AG04450 (cell line): ENCODE measurements at regions of chr15 and their contacts with region 1.

Region 1: DNA sequence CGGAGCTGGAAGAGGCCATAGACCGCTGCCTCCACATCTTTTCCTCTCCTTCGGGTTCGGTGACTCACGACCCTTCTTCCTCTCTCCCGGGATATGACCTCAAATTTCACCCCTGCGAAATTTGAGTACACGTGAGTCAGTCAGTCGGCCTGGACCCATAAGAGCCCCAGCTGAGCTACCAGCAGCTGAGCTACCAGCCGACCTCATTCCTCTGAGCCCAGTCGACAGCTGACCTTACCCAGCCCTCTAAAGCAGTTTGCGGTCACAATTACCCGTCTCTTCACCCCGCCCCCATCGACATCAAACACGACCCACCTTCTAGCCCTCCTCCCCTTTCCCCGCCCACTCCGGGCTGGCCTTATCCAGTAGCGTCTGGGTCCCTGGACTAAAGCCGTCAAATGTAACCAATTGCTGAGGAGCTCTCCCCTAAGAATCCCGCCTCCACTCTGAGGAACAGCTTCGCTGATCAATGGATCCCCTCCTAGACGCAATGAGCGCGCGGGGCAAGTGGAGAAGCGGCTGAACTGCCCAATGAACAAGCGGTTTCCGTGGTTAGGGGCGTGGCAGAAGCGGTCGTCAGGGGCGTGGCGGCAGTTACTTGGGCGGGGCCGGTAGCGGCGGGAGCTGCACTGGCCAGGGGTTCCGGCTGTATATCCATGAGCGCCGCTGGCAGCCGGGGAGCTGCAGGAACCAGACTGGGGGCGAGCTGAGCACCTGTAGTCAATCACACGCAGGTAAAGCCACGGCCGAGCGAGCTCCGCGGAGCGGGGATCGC is at the start of gene ABHD2:
- DNase-seq: peak; percentile 100
- H3K4me3 ChIP-seq: peak within 1 kb of the TSS; percentile 87
- H3K27ac ChIP-seq: peak within 1 kb of the TSS; percentile 98
- H3K27me3 ChIP-seq: no peaks in the 10 kb centered on the region
- CTCF ChIP-seq: no peak
- polyA plus RNA-seq, gene ABHD2: 51.5 and 60.1 TPM in 2 replicates

Region 2: DNA sequence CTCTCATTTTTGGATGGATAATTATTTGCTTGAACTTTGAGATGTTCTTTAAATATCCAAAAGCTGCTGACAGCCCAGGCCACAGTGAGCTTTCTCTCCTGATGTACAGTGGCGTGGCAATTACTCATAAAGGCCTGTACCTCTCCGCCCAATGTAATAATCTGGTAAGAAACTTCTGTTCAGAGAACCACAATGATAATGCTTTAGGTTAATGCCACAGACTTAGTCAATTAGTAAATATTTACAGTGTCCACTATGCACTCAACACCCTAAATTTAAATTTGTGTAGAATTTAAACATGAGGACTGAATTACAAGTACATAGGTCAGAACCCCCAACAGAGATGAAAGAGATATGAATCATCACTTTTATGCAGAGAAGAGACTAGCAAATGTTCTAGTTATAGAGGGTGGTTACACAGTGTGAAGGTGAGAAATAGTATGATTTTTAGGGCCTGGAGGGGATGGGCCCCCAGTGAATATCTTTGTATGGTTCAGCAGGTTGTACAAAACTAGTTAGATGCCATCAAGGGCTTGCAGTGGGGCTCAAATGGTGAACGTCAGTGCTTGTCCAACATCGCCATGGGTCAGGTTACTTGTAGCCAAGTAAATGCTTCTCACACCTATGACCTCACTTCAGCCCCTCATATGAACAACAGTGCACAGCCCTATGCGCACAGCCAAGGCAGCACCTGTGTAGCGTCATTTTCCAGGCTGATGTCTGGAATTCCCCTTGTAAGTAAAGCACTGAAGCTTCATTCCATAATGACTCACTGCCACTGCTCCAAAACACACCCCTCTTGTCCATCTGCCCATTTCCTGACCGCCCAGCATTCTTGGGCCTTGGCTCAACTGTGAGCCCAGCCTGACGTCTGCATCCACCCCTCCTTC is 13.5 kb after region 1 on chr15:
- CTCF ChIA-PET with region 1: interaction called, 9 read pairs
- POLR2A ChIA-PET with region 1: interaction called, 21 read pairs
- DNase-seq: peak; percentile 97
- H3K4me3 ChIP-seq: no peak overlapping the region
- H3K27ac ChIP-seq: peak overlapping the region; percentile 97
- H3K27me3 ChIP-seq: no peaks in the 10 kb centered on the region
- CTCF ChIP-seq: no peak

Region 3: GRCh38 chr15:89143503-89144162 is 55.6 kb after region 1 on chr15:
- CTCF ChIA-PET with region 1: interaction called, 3 read pairs
- POLR2A ChIA-PET with region 1: interaction called, 10 read pairs
- DNase-seq: peak; percentile 75
- H3K4me3 ChIP-seq: no peak overlapping the region
- H3K27ac ChIP-seq: peak overlapping the region; percentile 11
- H3K27me3 ChIP-seq: no peaks in the 10 kb centered on the region
- CTCF ChIP-seq: no peak

Region 4: DNA sequence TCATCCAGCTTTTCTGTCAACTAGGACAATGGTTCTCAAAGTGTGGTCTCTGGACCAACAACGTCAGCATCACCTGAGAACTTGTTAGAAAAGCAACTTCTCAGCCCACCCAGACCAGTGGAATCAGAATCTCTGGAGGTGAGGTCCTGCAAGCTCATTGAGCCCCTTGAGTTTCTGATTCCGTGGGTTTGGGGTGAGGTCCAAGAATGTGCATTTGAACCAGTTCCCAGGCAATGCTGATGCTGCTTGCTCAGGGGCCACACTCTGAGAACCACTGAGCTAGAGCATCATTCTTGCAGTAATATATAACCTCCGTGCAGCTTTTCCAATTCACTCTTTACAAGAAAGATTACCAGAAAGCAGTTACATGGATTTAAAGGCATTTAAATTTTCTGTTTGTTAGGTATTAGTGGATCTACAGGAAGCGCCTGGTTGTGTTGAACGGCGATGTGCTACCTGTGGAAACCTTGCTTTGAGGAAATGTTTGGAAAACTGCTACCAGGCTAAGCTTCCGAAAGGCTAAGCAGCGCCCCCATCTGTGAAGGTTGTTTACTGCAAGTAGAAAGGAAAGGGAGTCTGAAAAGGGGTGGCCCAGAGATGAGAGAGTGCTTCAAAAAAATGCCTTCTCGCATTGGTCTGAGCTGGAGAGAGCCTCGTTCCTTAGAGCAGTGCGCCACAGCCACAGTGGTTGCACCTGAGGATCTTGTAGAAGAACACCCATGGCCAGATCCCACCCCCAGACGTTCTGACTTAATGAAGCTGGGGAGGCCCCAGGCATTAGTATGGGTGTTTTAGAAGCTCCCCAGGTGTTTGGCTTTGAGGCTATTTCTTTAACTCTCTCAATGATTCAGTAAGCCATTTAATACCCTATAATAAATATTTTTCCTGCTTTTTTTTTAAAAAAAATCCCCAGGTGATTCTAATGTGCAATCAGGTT is 83.4 kb after region 1 on chr15:
- CTCF ChIA-PET with region 1: interaction called, 12 read pairs
- POLR2A ChIA-PET with region 1: interaction called, 3 read pairs
- DNase-seq: no peak
- H3K4me3 ChIP-seq: no peak overlapping the region
- H3K27ac ChIP-seq: no peak overlapping the region
- H3K27me3 ChIP-seq: no peaks in the 10 kb centered on the region
- CTCF ChIP-seq: peak; percentile 72

Region 5: DNA sequence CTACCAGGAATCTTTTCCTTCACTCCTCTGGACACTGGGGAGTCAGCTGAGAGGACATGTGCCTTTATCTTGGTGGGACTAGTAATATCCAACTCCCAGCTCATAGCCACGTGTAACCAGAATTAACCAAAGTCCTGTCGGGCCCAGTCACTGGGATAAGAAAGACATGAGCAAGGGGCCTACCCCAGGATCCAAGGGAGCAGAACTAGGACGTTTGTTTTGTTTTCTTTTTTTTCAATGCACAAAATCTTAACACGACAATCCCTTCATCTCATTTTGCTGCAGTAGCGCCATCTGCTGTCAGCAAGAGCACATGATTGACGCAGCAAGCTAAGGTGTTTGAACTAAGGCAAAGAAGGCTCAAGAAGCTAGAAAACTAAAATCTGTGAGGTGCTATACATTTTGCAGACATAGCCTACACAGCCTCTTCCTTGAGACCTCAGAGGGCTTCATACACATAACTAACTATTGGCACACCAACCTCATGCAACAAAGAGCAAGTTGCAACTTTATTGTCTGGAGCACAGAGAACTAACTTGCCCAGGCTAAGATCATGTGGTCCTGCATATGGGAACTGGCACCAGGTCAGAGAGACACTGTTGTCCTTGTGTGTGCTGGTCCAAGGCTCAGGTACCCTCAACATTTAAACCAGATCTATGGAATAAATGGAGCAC is 89.8 kb after region 1 on chr15:
- CTCF ChIA-PET with region 1: interaction called, 20 read pairs
- POLR2A ChIA-PET with region 1: interaction called, 3 read pairs
- DNase-seq: peak; percentile 57
- H3K4me3 ChIP-seq: no peak overlapping the region
- H3K27ac ChIP-seq: no peak overlapping the region
- H3K27me3 ChIP-seq: no peaks in the 10 kb centered on the region
- CTCF ChIP-seq: peak; percentile 88

Region 6: DNA sequence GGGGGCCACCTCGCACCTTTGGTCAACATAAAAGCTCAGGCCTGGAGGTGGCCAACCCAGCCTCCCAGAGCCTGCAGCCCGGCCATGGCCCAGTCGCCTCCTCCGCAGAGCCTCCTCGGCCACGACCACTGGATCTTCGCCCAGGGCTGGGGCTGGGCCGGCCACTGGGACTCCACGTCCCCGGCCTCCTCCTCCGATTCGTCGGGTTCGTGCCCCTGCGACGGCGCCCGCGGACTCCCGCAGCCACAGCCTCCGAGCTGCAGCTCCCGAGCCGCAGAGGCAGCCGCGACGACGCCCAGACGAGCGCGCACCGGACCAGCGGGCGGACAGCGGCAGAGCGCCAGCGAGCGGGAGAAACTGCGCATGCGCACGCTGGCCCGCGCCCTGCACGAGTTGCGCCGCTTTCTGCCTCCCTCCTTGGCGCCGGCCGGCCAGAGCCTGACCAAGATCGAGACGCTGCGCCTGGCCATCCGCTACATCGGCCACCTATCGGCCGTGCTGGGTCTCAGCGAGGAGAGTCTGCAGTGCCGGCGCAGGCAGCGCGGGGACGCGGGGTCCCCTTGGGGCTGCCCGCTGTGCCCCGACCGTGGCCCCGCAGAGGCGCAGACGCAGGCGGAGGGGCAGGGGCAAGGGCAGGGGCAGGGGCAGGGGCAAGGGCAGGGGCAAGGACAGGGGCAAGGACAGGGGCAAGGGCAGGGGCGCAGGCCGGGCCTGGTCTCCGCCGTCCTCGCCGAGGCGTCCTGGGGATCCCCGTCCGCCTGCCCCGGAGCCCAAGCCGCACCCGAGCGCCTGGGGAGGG is 688.5 kb after region 1 on chr15 and contains the start of gene MESP2:
- CTCF ChIA-PET with region 1: interaction called, 10 read pairs
- POLR2A ChIA-PET with region 1: interaction called, 12 read pairs
- DNase-seq: no peak
- H3K4me3 ChIP-seq: peak within 1 kb of the TSS; percentile 57
- H3K27ac ChIP-seq: no peak within 1 kb of the TSS
- H3K27me3 ChIP-seq: no peaks in the 10 kb centered on the region
- CTCF ChIP-seq: peak; percentile 44
- polyA plus RNA-seq, gene MESP2: 0.20 and 0.22 TPM in 2 replicates